ENCODE measurements at regions of chr1 and their contacts with region 1.

Region 1: GRCh38 chr1:226626577-226626956 is 78.0 kb downstream of the STUM start:
- DNase-seq: peak; percentile 40
- H3K4me3 ChIP-seq: no peak overlapping the region
- H3K27ac ChIP-seq: no peak overlapping the region
- H3K4me1 ChIP-seq: peaks cover 7% of the 10 kb centered on the region
- H3K27me3 ChIP-seq: no peaks in the 10 kb centered on the region
- CTCF ChIP-seq: peak; percentile 83 to 92

Region 2: GRCh38 chr1:226444901-226445300 is 181.7 kb before region 1 on chr1:
- CTCF ChIA-PET with region 1: no interaction called
- dilution Hi-C with region 1: no loop called
- in situ Hi-C with region 1: no loop called
- intact Hi-C with region 1: loop called (anchors 5 kb)
- DNase-seq: no peak
- H3K4me3 ChIP-seq: no peak overlapping the region
- H3K27ac ChIP-seq: no peak overlapping the region
- H3K4me1 ChIP-seq: no peaks in the 10 kb centered on the region
- H3K27me3 ChIP-seq: peaks cover 3% of the 10 kb centered on the region
- CTCF ChIP-seq: no peak

Region 3: DNA sequence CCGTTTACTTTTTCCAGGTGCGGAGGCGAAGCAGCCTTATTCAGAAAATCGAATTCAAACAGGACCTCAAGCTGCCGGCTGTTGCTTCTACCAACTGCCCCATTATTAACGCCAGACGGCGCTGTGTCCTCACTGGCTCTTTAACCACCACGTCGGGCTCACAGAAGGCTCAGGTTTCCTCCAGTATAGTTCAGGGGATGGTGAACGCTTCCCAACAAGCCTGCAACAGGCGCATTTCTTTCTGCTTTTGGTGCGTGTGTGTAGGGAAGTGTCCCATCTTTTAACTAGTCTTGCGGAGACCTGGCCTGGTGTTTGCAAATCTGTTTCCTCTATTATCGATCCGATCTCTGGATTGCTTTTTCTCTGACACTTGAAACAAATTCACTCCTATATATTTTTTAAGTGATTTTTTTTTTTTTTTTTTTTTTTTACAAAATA is 78.8 kb before region 1 on chr1:
- CTCF ChIA-PET with region 1: no interaction called
- dilution Hi-C with region 1: no loop called
- in situ Hi-C with region 1: no loop called
- intact Hi-C with region 1: no loop called
- DNase-seq: peak; percentile 81
- H3K4me3 ChIP-seq: no peak overlapping the region
- H3K27ac ChIP-seq: no peak overlapping the region
- H3K4me1 ChIP-seq: peaks cover 21% of the 10 kb centered on the region
- H3K27me3 ChIP-seq: peaks cover 12% of the 10 kb centered on the region
- CTCF ChIP-seq: peak; percentile 98 to 99

Region 4: DNA sequence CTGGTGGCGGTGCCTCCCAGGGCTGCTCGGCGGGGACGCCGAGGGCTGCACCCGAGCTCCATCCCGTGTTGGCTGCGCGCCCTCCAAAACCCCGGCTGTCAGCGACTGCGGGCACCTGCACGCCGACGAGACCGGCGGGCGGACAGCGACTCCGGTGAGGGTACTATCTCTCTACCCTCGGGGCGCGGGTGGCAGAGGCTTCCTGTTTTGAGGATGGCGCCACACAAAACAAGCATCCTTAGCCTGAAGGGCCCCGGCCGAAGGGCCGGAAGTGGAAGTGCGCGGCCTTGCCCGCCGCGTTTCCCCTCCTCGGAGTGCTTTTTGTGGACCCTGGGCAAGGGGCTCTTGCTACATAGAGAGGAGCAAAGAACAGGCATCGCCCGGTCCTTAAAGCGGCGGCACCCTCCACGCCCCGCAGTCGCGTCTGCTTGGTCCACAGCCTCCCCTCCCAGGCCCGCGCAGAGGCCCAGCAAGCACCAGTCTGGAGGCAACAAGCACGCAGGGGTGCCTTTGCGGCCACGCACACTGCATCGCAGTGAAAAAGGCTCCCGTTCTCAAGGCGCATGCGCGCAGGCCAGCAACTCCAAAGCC is 313.0 kb after region 1 on chr1:
- CTCF ChIA-PET with region 1: interaction called, 13 read pairs
- dilution Hi-C with region 1: no loop called
- in situ Hi-C with region 1: no loop called
- intact Hi-C with region 1: no loop called
- DNase-seq: peak; percentile 54
- H3K4me3 ChIP-seq: peak overlapping the region; percentile 61 to 79 (median 77)
- H3K27ac ChIP-seq: peak overlapping the region; percentile 74
- H3K4me1 ChIP-seq: peaks cover 25% of the 10 kb centered on the region
- H3K27me3 ChIP-seq: no peaks in the 10 kb centered on the region
- CTCF ChIP-seq: no peak

Measured in mammary epithelial cell (primary cell).